K562 (cell line): ENCODE measurements at regions of chr6 and their contacts with region 1.

Region 1: DNA sequence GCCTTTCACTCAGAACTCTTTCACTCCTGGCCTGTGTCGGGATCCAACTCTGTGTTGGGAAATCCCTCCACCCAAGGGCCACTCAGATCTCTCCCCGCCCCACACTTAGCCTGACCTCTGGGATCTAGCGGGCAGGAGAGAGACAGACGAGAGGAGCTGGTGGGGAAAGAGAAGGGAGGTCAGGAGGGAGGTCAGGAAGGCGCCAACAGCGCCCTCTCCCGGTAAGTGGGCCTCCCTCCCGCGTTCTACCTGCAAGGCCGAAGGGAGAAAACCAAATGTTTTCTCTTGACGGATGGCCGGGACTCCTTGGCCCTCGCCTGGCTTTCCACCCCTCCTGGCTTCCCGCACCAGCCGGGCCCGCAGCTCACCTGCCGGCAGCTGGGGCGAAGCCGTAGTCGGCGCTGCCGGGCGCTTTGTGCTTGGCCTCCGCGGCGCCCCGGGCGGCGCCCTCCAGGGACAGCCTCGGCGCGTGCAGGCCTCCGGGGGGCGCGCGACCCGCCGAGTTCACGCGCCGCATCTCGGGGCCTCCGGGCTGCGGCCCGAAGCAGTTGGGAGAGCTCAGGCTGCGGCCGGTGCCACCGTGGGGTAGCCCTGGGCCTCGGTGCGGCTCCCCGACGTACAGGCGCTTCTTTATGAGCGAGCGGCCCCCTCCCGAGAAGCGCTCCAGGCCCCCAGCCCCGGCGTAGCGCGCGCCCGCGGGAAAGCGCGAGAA is 38.2 kb downstream of the C6orf132 start:
- DNase-seq: peak; percentile 93 to 96 (median 94)
- ATAC-seq: peak; percentile 88
- H3K4me3 ChIP-seq: peak overlapping the region; percentile 50
- H3K27ac ChIP-seq: peak overlapping the region; percentile 74
- H3K4me1 ChIP-seq: peaks cover 43 to 56% of the 10 kb centered on the region in 2 experiments
- H3K27me3 ChIP-seq: peaks cover 3 to 6% of the 10 kb centered on the region in 2 experiments; a peak in 2 of 5 replicates
- CTCF ChIP-seq: peak; percentile 89 to 99 (median 94)
- EP300 ChIP-seq: no peak
- POLR2A ChIP-seq: peak; percentile 79
- RAD21 ChIP-seq: peak; percentile 84 to 85

Region 2: GRCh38 chr6:41805830-41806774 is 298.1 kb before region 1 on chr6:
- CTCF ChIA-PET with region 1: no interaction called
- POLR2A ChIA-PET with region 1: no interaction called
- in situ Hi-C with region 1: no loop called
- intact Hi-C with region 1: no loop called
- DNase-seq: no peak
- ATAC-seq: no peak
- H3K4me3 ChIP-seq: no peak overlapping the region
- H3K27ac ChIP-seq: no peak overlapping the region
- H3K4me1 ChIP-seq: peaks cover 0 to 3% of the 10 kb centered on the region in 2 experiments; a peak in 1 of 5 replicates
- H3K27me3 ChIP-seq: no peaks in the 10 kb centered on the region
- CTCF ChIP-seq: no peak
- EP300 ChIP-seq: no peak
- POLR2A ChIP-seq: no peak
- RAD21 ChIP-seq: no peak

Region 3: DNA sequence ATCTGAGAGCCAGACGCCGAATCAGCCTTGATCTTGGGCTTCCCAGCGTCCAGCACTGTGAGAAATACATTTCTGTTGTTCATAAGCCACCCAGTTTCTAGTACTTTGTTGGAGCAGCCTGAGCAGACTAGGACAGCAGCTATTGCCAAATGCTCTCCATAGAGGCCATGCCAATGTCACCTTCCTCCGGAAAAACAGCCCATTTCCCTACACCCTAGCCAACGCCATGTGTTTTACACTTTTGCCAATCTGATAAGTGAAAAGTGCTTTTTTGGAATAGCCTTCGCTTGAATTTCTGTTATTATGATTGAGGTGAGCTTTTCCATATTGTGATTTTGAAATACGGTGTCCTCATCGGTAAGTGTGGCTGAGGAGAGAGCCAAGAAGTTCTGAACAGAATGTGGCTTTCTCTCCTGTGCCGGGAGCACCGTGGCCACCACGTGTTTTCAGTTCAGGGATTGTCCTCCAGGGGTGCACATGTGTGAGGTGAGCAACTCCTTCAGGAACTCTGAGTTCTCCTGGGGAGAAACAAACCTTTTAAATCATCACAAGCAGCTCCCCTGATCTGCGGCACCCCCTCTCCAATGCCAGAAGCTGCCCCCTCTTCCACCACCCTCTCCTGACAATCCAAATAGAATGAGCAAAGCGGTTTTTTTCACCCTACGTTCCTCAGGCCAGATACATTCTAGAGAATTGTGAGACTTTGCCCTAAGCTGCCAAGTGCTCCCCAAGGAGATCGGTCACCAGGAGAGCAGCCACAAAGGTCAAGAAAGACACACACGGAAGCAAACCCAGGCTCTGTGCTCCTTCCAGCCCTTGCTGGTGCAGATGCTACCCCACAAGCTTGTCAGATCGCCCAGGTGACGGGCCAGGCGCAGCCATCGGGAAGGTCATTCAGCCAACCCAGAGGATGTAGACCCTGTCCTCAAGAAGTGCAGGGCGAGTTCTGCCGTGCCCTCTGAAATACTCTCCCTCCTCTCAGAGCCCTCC is 17.9 kb before region 1 on chr6:
- CTCF ChIA-PET with region 1: no interaction called
- POLR2A ChIA-PET with region 1: interaction called, 48 read pairs
- in situ Hi-C with region 1: no loop called
- intact Hi-C with region 1: loop called (anchors 1 kb)
- DNase-seq: peak; percentile 63 to 71 (median 66)
- ATAC-seq: peak; percentile 67
- H3K4me3 ChIP-seq: no peak overlapping the region
- H3K27ac ChIP-seq: no peak overlapping the region
- H3K4me1 ChIP-seq: peaks cover 27 to 32% of the 10 kb centered on the region in 2 experiments
- H3K27me3 ChIP-seq: no peaks in the 10 kb centered on the region
- CTCF ChIP-seq: peak; percentile 39 to 58 (median 42); a peak in 5 of 6 replicates
- EP300 ChIP-seq: no peak
- POLR2A ChIP-seq: no peak
- RAD21 ChIP-seq: peak in 1 of 2 experiments; percentile 23; a peak in 1 of 4 replicates

Region 4: GRCh38 chr6:42118162-42119001 is 14.1 kb after region 1 on chr6:
- CTCF ChIA-PET with region 1: interaction called, 3 read pairs
- POLR2A ChIA-PET with region 1: interaction called, 42 read pairs
- in situ Hi-C with region 1: no loop called
- intact Hi-C with region 1: no loop called
- DNase-seq: no peak
- ATAC-seq: peak; percentile 59
- H3K4me3 ChIP-seq: no peak overlapping the region
- H3K27ac ChIP-seq: no peak overlapping the region
- H3K4me1 ChIP-seq: peaks cover 0 to 11% of the 10 kb centered on the region in 2 experiments; a peak in 2 of 5 replicates
- H3K27me3 ChIP-seq: peaks cover 2 to 14% of the 10 kb centered on the region in 2 experiments; a peak in 3 of 5 replicates
- CTCF ChIP-seq: no peak
- EP300 ChIP-seq: no peak
- POLR2A ChIP-seq: no peak
- RAD21 ChIP-seq: no peak